Endothelial cell of umbilical vein (primary cell): ENCODE measurements at regions of chr9 and their contacts with region 1.

Region 1: DNA sequence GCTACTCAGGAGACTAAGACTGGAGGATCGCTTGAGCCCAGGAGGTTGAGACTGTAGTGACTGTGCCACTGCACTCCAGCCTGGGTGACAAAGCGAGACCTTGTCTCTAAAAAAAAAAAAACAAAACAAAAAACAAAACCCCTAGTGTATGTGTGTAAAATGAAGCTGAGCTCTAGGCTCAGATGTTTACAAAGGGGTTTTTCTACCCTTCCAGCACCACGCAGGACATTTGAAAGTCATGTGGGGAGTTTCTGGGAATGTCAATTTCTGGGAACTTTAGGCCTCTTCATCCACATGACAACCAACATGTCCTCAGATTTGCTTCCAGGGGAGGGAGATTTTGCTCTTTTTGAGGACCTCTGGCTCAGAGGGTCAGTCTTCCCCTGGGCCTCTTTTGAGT is 42.4 kb upstream of the AIF1L start:
- DNase-seq: no peak
- H3K4me3 ChIP-seq: no peak overlapping the region
- H3K27ac ChIP-seq: no peak overlapping the region
- H3K4me1 ChIP-seq: no peaks in the 10 kb centered on the region
- H3K27me3 ChIP-seq: no peaks in the 10 kb centered on the region
- CTCF ChIP-seq: no peak
- POLR2A ChIP-seq: no peak

Region 2: DNA sequence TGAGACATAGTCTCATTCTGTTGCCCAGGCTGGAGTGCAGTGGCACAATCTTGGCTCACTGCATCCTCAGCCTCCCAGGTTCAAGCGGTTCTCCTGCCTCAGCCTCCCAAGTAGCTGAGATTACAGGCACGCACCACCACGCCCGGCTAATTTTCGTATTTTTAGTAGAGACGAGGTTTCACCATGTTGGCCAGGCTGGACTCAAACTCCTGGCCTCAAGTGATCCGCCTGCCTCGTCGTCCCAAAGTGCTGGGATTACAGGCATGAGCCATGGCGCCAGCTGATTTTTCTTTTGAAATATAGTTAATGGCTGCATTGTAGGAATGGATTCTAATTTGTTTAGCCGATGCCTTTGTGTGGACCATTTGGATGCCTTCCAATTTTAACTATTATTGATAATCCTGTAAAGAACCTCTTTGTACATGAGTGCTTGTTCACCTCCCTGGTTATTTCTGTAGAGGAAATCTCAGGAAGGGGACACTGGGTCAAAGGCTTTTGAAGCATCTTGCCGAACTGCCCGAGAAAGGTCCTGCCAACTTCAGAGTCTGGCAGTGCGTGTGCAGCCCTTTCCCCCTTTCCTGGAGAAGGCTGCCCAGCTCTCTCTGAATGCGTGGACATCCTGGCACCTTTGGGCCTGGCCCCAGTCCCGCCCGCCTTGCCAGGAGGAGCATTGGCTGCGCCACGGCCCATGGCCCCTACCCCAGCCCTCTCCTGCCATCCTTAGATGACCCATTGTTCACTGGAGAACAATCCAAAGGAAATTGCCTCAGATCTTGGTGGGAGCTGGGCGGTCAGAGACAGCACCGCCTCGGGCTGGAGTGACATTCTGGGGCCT is 62.6 kb after region 1 on chr9:
- CTCF ChIA-PET with region 1: interaction called, 10 read pairs
- POLR2A ChIA-PET with region 1: no interaction called
- dilution Hi-C with region 1: no loop called
- intact Hi-C with region 1: loop called (anchors 2 kb)
- DNase-seq: no peak
- H3K4me3 ChIP-seq: peak overlapping the region in 1 of 3 experiments; percentile 22
- H3K27ac ChIP-seq: peak overlapping the region; percentile 96
- H3K4me1 ChIP-seq: peaks cover 27% of the 10 kb centered on the region
- H3K27me3 ChIP-seq: no peaks in the 10 kb centered on the region
- CTCF ChIP-seq: no peak
- POLR2A ChIP-seq: no peak

Region 3: DNA sequence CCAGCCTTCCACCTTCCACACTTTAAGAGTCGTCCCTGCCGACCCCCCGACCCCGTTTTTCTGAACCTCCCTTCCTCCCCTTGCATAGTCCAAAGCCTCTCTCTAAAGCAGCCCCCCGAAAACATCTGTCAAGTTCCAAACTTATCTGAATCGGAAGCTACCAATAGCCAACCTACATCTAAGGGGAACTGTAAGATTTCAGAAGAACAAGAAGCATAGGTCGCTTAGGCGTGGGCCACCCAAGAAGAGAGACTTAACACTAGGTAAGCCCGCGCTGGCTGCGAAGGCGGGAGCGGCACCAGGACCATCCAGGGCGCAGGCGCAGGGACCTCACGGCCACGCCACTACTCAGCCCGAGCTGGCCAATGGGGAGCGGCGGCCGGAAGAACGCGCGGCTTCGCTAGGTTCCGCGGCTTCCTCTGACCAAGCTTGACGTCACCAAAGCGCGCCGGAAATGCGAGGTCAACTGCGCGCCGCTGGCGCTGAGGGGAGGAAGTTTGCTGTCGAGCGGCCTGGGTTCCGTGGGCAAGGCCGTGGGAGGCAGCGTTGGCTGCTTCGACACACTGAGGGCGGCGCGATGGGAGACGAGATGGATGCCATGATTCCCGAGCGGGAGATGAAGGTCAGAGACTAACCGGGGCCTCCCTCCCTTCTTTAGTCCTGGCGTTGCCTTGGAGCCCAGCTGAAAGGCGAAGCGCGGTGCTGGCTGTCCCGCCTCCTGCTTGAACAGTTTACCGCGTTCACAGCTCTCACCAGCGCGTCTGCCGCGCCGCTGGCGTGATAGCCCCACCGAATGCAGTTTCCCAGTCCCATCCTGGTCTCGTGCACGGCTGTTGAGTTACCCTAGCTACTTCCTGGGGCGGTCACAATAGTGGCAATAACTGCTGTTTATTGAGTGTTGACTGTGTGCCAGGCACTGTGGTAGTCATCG is 71.5 kb after region 1 on chr9 and contains the start of gene NUP214:
- CTCF ChIA-PET with region 1: interaction called, 17 read pairs
- POLR2A ChIA-PET with region 1: no interaction called
- dilution Hi-C with region 1: no loop called
- intact Hi-C with region 1: loop called (anchors 1 kb)
- DNase-seq: peak; percentile 99
- H3K4me3 ChIP-seq: peak within 1 kb of the TSS; percentile 37 to 83 (median 65)
- H3K27ac ChIP-seq: peak within 1 kb of the TSS; percentile 63
- H3K4me1 ChIP-seq: peaks cover 11% of the 10 kb centered on the region
- H3K27me3 ChIP-seq: no peaks in the 10 kb centered on the region
- CTCF ChIP-seq: no peak
- POLR2A ChIP-seq: peak; percentile 97
- total RNA-seq, gene NUP214: 58.1 and 65.9 TPM in 2 replicates

Region 4: GRCh38 chr9:131149688-131150053 is 95.8 kb after region 1 on chr9:
- CTCF ChIA-PET with region 1: interaction called, 3 read pairs
- POLR2A ChIA-PET with region 1: no interaction called
- dilution Hi-C with region 1: no loop called
- intact Hi-C with region 1: loop called (anchors 5 kb)
- DNase-seq: peak; percentile 37
- H3K4me3 ChIP-seq: no peak overlapping the region
- H3K27ac ChIP-seq: no peak overlapping the region
- H3K4me1 ChIP-seq: no peaks in the 10 kb centered on the region
- H3K27me3 ChIP-seq: no peaks in the 10 kb centered on the region
- CTCF ChIP-seq: no peak
- POLR2A ChIP-seq: no peak

Region 5: GRCh38 chr9:131161595-131161994 is 107.7 kb after region 1 on chr9:
- CTCF ChIA-PET with region 1: interaction called, 15 read pairs
- POLR2A ChIA-PET with region 1: no interaction called
- dilution Hi-C with region 1: no loop called
- intact Hi-C with region 1: no loop called
- DNase-seq: no peak
- H3K4me3 ChIP-seq: no peak overlapping the region
- H3K27ac ChIP-seq: no peak overlapping the region
- H3K4me1 ChIP-seq: no peaks in the 10 kb centered on the region
- H3K27me3 ChIP-seq: no peaks in the 10 kb centered on the region
- CTCF ChIP-seq: no peak
- POLR2A ChIP-seq: no peak

Region 6: GRCh38 chr9:131252120-131252519 is 198.2 kb after region 1 on chr9:
- CTCF ChIA-PET with region 1: no interaction called
- POLR2A ChIA-PET with region 1: no interaction called
- dilution Hi-C with region 1: no loop called
- intact Hi-C with region 1: no loop called
- DNase-seq: no peak
- H3K4me3 ChIP-seq: no peak overlapping the region
- H3K27ac ChIP-seq: no peak overlapping the region
- H3K4me1 ChIP-seq: peaks cover 7% of the 10 kb centered on the region
- H3K27me3 ChIP-seq: no peaks in the 10 kb centered on the region
- CTCF ChIP-seq: no peak
- POLR2A ChIP-seq: no peak